Activated T-helper 1 cell treated with anti-CD3 and anti-CD28 coated beads, Interleukin-12 subunit alpha, Interleukin-12 subunit beta, Interleukin-2, Interleukin-4 antibody, amounts not matched to agents 30 ng/mL and 10 ng/mL and 1 ng/mL, durations not matched to agents 14 hours and 24 hours and 36 hours (primary cell): ENCODE measurements at regions of chr1 and their contacts with region 1.

Region 1: GRCh38 chr1:84781946-84782771 is 91.9 kb upstream of the SSX2IP start:
- DNase-seq: peak; percentile 57
- H3K4me3 Mint-ChIP-seq: peak overlapping the region; percentile 71
- H3K27ac Mint-ChIP-seq: no peak overlapping the region
- H3K4me1 Mint-ChIP-seq: peaks cover 36% of the 10 kb centered on the region
- H3K27me3 Mint-ChIP-seq: peaks cover 3% of the 10 kb centered on the region

Region 2: GRCh38 chr1:84936116-84936810 is 154.1 kb after region 1 on chr1:
- intact Hi-C with region 1: loop called (anchors 2 kb)
- DNase-seq: peak; percentile 26
- H3K4me3 Mint-ChIP-seq: no peak overlapping the region
- H3K27ac Mint-ChIP-seq: no peak overlapping the region
- H3K4me1 Mint-ChIP-seq: peaks cover 7% of the 10 kb centered on the region
- H3K27me3 Mint-ChIP-seq: no peaks in the 10 kb centered on the region